GM12878 (cell line): ENCODE measurements at regions of chr9 and their contacts with region 1.

Region 1: DNA sequence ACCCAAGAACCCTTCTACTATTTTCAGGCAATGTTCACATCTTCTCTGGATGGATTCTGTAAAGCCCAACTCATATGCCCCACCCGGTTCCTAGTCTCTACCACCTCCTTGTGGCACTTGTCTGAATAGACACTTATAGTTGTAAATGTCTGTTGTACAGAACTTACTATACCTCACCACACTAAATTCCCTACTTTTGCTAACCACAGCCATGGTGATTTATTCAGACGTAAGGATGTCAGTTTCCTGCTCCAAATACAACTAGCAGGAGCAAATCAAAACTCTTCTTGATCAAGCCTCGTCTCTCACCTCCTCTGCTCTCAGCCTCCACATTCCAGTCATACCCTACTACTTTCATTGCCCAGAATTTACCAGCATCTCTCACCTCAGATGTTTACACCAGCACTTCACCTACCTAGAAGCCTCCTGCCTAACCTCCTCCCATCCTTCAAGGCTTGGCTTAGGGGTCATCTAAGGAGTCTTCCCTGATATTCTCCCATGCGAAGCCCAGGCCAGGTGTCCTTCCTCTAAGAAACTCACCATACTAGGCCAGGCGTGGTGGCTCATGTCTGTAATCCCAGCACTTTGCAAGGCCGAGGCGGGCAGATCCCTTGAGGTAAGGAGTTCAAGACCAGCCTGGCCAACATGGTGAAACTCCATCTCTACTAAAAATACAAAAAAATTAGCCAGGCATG is 75.5 kb downstream of the MAPKAP1 start:
- DNase-seq: no peak
- ATAC-seq: peak; percentile 49
- H3K4me3 ChIP-seq: peak overlapping the region; percentile 32; the same call in 1 of the 2 replicates
- H3K27ac ChIP-seq: peak overlapping the region; percentile 98
- H3K4me1 ChIP-seq: peaks cover 75% of the 10 kb centered on the region
- H3K27me3 ChIP-seq: no peaks in the 10 kb centered on the region
- CTCF ChIP-seq: peak; percentile 69 to 74 (median 70)
- EP300 ChIP-seq: no peak
- POLR2A ChIP-seq: no peak
- RAD21 ChIP-seq: peak; percentile 92

Region 2: GRCh38 chr9:124218438-124218982 is 1413.0 kb before region 1 on chr9:
- CTCF ChIA-PET with region 1: no interaction called
- POLR2A ChIA-PET with region 1: no interaction called
- RAD21 ChIA-PET with region 1: no interaction called
- SMC1A ChIA-PET with region 1: no interaction called
- in situ Hi-C with region 1: loop called (anchors 25 kb)
- intact Hi-C with region 1: no loop called
- DNase-seq: peak; percentile 92
- ATAC-seq: peak; percentile 76
- H3K4me3 ChIP-seq: no peak overlapping the region; the same call in 1 of the 2 replicates
- H3K27ac ChIP-seq: peak overlapping the region; percentile 98
- H3K4me1 ChIP-seq: peaks cover 54% of the 10 kb centered on the region
- H3K27me3 ChIP-seq: no peaks in the 10 kb centered on the region
- CTCF ChIP-seq: no peak
- EP300 ChIP-seq: peak; percentile 70 to 97; a peak in 3 of 4 replicates
- POLR2A ChIP-seq: peak; percentile 45
- RAD21 ChIP-seq: peak; percentile 41; the same call in 1 of the 2 replicates

Region 3: GRCh38 chr9:125428060-125428901 is 203.3 kb before region 1 on chr9:
- CTCF ChIA-PET with region 1: interaction called, 4 read pairs
- POLR2A ChIA-PET with region 1: no interaction called
- RAD21 ChIA-PET with region 1: interaction called, 3 read pairs
- SMC1A ChIA-PET with region 1: interaction called, 6 read pairs
- in situ Hi-C with region 1: no loop called
- intact Hi-C with region 1: loop called (anchors 2 kb)
- DNase-seq: no peak
- ATAC-seq: peak; percentile 85
- H3K4me3 ChIP-seq: no peak overlapping the region
- H3K27ac ChIP-seq: no peak overlapping the region
- H3K4me1 ChIP-seq: no peaks in the 10 kb centered on the region
- H3K27me3 ChIP-seq: no peaks in the 10 kb centered on the region
- CTCF ChIP-seq: peak; percentile 61 to 80 (median 63)
- EP300 ChIP-seq: no peak
- POLR2A ChIP-seq: no peak
- RAD21 ChIP-seq: peak; percentile 59

Region 4: DNA sequence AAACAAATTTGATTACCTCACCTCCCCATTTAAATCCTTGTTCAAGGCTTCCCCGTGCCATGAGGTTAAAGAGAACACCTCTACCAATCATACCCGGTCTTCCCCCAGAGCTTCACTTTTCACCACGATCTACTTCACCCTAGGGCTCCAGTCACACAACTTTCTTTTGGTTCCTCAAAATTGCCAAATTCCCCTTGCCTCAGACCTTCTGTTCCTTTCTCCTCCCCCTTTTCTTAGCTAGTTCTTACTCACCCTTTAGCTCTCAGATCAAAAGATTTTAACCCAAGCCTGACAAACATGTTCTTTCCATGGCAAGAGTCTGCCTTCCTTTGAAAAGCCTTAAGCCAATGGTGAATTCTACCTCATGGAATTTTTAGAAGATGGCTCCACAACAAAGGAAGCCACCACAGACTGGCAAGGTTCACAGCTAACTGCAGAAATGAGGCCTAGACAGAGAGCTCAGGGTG is 18.8 kb after region 1 on chr9:
- CTCF ChIA-PET with region 1: interaction called, 29 read pairs
- POLR2A ChIA-PET with region 1: interaction called, 68 read pairs
- RAD21 ChIA-PET with region 1: interaction called, 237 read pairs
- SMC1A ChIA-PET with region 1: interaction called, 251 read pairs
- in situ Hi-C with region 1: no loop called
- intact Hi-C with region 1: loop called (anchors 1 kb)
- DNase-seq: peak; percentile 96
- ATAC-seq: peak; percentile 84
- H3K4me3 ChIP-seq: peak overlapping the region; percentile 53; the same call in 1 of the 2 replicates
- H3K27ac ChIP-seq: peak overlapping the region; percentile 95
- H3K4me1 ChIP-seq: peaks cover 59% of the 10 kb centered on the region
- H3K27me3 ChIP-seq: no peaks in the 10 kb centered on the region
- CTCF ChIP-seq: no peak
- EP300 ChIP-seq: peak; percentile 96 to 97
- POLR2A ChIP-seq: 0 out of 2 replicates have a peak, but pooled peaks have one; percentile 24
- RAD21 ChIP-seq: no peak

Region 5: GRCh38 chr9:125700791-125701190 is 69.3 kb after region 1 on chr9:
- CTCF ChIA-PET with region 1: interaction called, 12 read pairs
- POLR2A ChIA-PET with region 1: interaction called, 17 read pairs
- RAD21 ChIA-PET with region 1: interaction called, 151 read pairs
- SMC1A ChIA-PET with region 1: interaction called, 157 read pairs
- in situ Hi-C with region 1: no loop called
- intact Hi-C with region 1: loop called (anchors 1 kb)
- DNase-seq: peak; percentile 84
- ATAC-seq: peak; percentile 89
- H3K4me3 ChIP-seq: peak overlapping the region; percentile 46; the same call in 1 of the 2 replicates
- H3K27ac ChIP-seq: peak overlapping the region; percentile 68
- H3K4me1 ChIP-seq: peaks cover 22% of the 10 kb centered on the region
- H3K27me3 ChIP-seq: no peaks in the 10 kb centered on the region
- CTCF ChIP-seq: no peak
- EP300 ChIP-seq: peak; percentile 81 to 82; a peak in 2 of 4 replicates
- POLR2A ChIP-seq: no peak
- RAD21 ChIP-seq: no peak; the same call in 1 of the 2 replicates

Region 6: DNA sequence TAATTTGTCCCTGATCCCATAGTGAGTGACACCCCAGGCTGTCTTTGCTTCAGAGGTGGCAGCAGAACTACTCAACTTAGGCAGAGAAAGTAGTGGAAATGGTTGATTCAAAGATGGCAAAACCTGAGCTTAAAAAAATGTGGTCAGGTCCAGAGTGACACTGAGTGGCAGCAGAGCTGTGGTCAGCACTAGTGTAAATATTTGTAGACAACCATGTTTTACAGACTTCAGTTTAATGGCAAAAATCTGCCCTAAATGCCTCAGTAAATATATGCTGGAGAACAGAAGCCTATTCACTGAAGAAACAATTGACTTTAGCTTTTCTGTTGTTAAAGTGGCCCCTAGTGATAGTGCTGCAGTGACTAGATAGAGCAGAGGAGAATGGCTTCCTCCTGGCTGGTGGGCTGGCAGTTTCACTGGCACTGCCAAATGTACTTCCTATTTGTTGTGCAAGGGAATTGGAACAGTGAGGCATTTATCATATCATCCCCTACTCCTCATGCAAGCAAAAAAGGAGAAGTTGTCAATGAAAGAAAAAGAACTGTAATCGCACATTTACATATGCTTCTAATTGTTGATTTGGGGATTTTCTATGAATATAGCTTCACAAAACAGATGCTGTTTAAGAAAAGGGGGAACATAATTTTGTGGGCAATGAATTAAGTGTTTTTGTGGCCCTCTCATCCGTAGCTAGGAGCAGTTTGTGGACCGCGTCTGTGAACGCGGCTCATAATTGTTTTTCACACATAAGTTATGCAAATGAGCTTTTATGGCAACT is 127.6 kb after region 1 on chr9:
- CTCF ChIA-PET with region 1: interaction called, 5 read pairs
- POLR2A ChIA-PET with region 1: interaction called, 3 read pairs
- RAD21 ChIA-PET with region 1: interaction called, 8 read pairs
- SMC1A ChIA-PET with region 1: interaction called, 15 read pairs
- in situ Hi-C with region 1: no loop called
- intact Hi-C with region 1: no loop called
- DNase-seq: no peak
- ATAC-seq: peak; percentile 53
- H3K4me3 ChIP-seq: peak overlapping the region; percentile 49
- H3K27ac ChIP-seq: peak overlapping the region; percentile 4; the same call in 1 of the 2 replicates
- H3K4me1 ChIP-seq: peaks cover 7% of the 10 kb centered on the region; the same call in 1 of the 2 replicates
- H3K27me3 ChIP-seq: no peaks in the 10 kb centered on the region
- CTCF ChIP-seq: no peak; a peak in 1 of 6 replicates
- EP300 ChIP-seq: no peak
- POLR2A ChIP-seq: no peak
- RAD21 ChIP-seq: no peak